Prostate gland (tissue), 2 donors: ENCODE measurements at regions of chr6 and their contacts with region 1.

Region 1: GRCh38 chr6:107185391-107185970 is 70.2 kb upstream of the BEND3 start:
- DNase-seq: peak; percentile 42
- H3K4me3 ChIP-seq: no peak overlapping the region
- H3K27ac ChIP-seq: no peak overlapping the region
- H3K4me1 ChIP-seq: no peaks in the 10 kb centered on the region
- H3K27me3 ChIP-seq: no peaks in the 10 kb centered on the region
- CTCF ChIP-seq: peak; percentile 14 to 56 (median 30)
- POLR2A ChIP-seq: no peak

Region 2: GRCh38 chr6:107459283-107460082 is 274.0 kb after region 1 on chr6 and contains the start of gene PDSS2:
- intact Hi-C with region 1: loop called (anchors 10 kb)
- DNase-seq: peak; percentile 98
- H3K4me3 ChIP-seq: peak within 1 kb of the TSS; percentile 69 to 95
- H3K27ac ChIP-seq: peak within 1 kb of the TSS; percentile 80 to 92
- H3K4me1 ChIP-seq: peaks cover 3% of the 10 kb centered on the region
- H3K27me3 ChIP-seq: no peaks in the 10 kb centered on the region
- CTCF ChIP-seq: peak in 2 of 4 experiments; percentile 42 to 53
- POLR2A ChIP-seq: peak; percentile 67
- total RNA-seq, gene PDSS2: 12.7 to 35.3 TPM

Region 3: GRCh38 chr6:107847844-107848802 is 662.6 kb after region 1 on chr6:
- intact Hi-C with region 1: loop called (anchors 5 kb)
- DNase-seq: peak; percentile 73
- H3K4me3 ChIP-seq: peak overlapping the region; percentile 22 to 34
- H3K27ac ChIP-seq: no peak overlapping the region
- H3K4me1 ChIP-seq: no peaks in the 10 kb centered on the region
- H3K27me3 ChIP-seq: no peaks in the 10 kb centered on the region
- CTCF ChIP-seq: peak; percentile 90 to 96 (median 94)
- POLR2A ChIP-seq: no peak